K562 (cell line): ENCODE measurements at regions of chr9 and their contacts with region 1.

Region 1: GRCh38 chr9:134325817-134326723 is at the start of gene RXRA:
- DNase-seq: peak; percentile 86 to 94 (median 92)
- ATAC-seq: peak; percentile 75
- H3K4me3 ChIP-seq: peak within 1 kb of the TSS; percentile 62
- H3K27ac ChIP-seq: peak within 1 kb of the TSS; percentile 79
- H3K4me1 ChIP-seq: peaks cover 20 to 82% of the 10 kb centered on the region in 2 experiments
- H3K27me3 ChIP-seq: no peaks in the 10 kb centered on the region
- CTCF ChIP-seq: peak in 2 of 3 experiments; percentile 32 to 87; a peak in 3 of 6 replicates
- EP300 ChIP-seq: no peak
- POLR2A ChIP-seq: no peak; the same call in 1 of the 2 replicates
- RAD21 ChIP-seq: no peak
- polyA plus RNA-seq, gene RXRA: 0.35 to 0.56 TPM

Region 2: DNA sequence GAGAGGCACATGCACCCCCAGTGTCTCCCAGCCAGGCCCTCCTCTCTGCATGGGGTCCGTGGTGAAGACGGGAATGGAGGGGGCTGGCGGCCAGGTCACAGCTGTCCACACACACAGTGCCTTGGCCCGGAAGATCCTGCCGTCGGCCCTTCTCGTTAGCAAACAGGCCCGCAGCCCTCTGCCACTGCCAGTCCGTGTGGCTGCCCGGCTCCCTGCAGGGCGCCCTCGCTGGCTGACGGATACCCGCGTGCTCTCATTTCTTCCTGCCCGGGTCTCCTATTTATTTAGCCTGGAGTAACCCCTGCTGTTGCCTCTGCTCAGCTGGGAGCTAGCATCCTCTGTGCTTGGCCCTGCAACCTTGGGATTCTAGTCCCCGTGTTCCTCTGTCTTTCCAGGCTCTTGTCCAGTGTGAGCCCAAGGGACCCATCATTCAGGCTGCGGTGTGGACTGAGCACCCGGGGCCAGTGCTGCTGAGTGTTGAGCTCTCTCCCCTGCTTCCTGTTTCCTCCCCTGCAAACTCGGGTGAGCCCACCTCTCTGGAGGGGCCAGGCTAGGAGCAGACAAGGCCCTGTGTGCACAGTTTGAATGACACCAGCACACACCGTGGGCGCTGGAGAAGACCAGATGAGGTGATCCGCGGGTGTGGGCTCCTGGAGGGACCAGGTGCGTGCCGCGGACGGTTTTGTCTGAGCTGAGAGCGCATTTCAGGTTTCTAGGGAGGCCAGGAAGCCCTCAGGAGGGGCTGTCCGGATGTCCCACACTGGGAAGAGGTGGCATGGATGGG is 147.1 kb before region 1 on chr9:
- CTCF ChIA-PET with region 1: no interaction called
- POLR2A ChIA-PET with region 1: no interaction called
- in situ Hi-C with region 1: no loop called
- intact Hi-C with region 1: loop called (anchors 10 kb)
- DNase-seq: no peak
- ATAC-seq: no peak
- H3K4me3 ChIP-seq: no peak overlapping the region
- H3K27ac ChIP-seq: no peak overlapping the region
- H3K4me1 ChIP-seq: peaks cover 2 to 36% of the 10 kb centered on the region in 2 experiments; a peak in 3 of 5 replicates
- H3K27me3 ChIP-seq: peaks cover 34 to 71% of the 10 kb centered on the region in 2 experiments; a peak in 4 of 5 replicates
- CTCF ChIP-seq: no peak
- EP300 ChIP-seq: no peak
- POLR2A ChIP-seq: no peak
- RAD21 ChIP-seq: no peak

Region 3: DNA sequence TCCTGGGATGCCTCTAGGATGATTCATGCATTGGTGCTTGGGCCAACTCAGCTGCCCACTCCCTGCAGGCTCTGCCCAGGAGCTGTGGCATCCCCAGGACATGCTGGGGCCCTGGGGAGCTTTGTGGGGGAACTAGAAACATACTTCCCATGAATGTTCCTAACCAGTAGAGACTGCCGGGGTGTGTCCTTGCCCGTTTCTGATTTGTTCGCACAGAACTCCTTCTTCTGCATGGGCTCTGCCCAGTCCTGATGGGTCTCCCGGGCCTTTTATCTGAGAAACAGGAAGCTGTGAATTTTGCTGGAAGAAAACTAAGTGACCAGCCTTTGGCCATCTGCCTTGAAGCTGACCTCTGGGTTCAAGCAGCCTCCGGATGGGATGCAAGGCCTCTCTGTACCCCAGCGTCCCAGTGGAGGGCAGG is 90.1 kb before region 1 on chr9:
- CTCF ChIA-PET with region 1: no interaction called
- POLR2A ChIA-PET with region 1: no interaction called
- in situ Hi-C with region 1: no loop called
- intact Hi-C with region 1: no loop called
- DNase-seq: no peak
- ATAC-seq: no peak
- H3K4me3 ChIP-seq: no peak overlapping the region
- H3K27ac ChIP-seq: no peak overlapping the region
- H3K4me1 ChIP-seq: peaks cover 0 to 14% of the 10 kb centered on the region in 2 experiments; a peak in 2 of 5 replicates
- H3K27me3 ChIP-seq: peaks cover 18 to 59% of the 10 kb centered on the region in 2 experiments; a peak in 4 of 5 replicates
- CTCF ChIP-seq: no peak
- EP300 ChIP-seq: no peak
- POLR2A ChIP-seq: no peak
- RAD21 ChIP-seq: no peak

Region 4: DNA sequence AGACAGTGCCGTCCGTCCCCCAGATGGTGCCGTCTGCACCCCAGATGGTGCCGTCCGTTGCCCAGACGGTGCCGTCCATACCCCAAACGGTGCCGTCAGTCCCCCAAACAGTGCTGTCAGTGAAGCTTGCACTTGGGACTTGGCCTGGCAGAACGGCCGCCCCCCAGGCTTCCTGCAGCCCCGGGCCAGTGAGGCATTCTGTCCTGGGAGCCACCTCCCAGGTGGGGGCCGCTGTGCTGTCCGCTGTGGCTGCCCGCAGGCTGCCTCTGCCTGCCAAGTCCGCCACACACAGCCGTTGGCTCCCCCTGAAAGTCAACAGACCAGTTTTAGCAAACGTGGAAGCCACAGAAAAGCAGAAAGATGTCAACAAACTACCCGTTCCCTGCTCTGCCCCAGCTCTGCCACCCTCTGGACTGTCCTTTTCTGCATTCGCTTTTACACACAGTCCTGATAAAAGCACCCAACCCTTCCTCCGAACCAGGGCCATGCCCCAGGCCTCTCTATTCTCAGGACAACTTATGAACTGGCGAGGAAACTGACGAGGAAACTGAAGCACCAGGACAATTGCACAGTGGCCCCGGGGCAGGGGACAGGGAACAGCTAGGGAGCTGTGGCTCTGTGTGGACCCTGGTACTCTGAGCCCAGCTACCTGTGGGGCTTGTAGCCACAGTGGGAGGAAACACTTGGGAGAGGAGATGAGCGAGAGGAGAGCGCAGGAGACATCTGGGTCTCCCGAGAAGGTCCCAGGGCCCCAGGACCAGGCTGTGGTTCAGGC is 39.4 kb before region 1 on chr9:
- CTCF ChIA-PET with region 1: no interaction called
- POLR2A ChIA-PET with region 1: no interaction called
- in situ Hi-C with region 1: no loop called
- intact Hi-C with region 1: no loop called
- DNase-seq: no peak
- ATAC-seq: no peak
- H3K4me3 ChIP-seq: no peak overlapping the region
- H3K27ac ChIP-seq: no peak overlapping the region
- H3K4me1 ChIP-seq: peaks cover 0 to 16% of the 10 kb centered on the region in 2 experiments; a peak in 1 of 5 replicates
- H3K27me3 ChIP-seq: peaks cover 37 to 84% of the 10 kb centered on the region in 2 experiments; a peak in 4 of 5 replicates
- CTCF ChIP-seq: no peak
- EP300 ChIP-seq: no peak
- POLR2A ChIP-seq: no peak
- RAD21 ChIP-seq: no peak

Region 5: GRCh38 chr9:134339183-134339806 is 13.2 kb after region 1 on chr9:
- CTCF ChIA-PET with region 1: no interaction called
- POLR2A ChIA-PET with region 1: interaction called, 12 read pairs
- in situ Hi-C with region 1: no loop called
- intact Hi-C with region 1: no loop called
- DNase-seq: peak in 2 of 4 experiments; percentile 50 to 54
- ATAC-seq: peak; percentile 49
- H3K4me3 ChIP-seq: peak overlapping the region; percentile 2; the same call in 1 of the 2 replicates
- H3K27ac ChIP-seq: peak overlapping the region; percentile 81
- H3K4me1 ChIP-seq: peaks cover 44 to 100% of the 10 kb centered on the region in 2 experiments
- H3K27me3 ChIP-seq: no peaks in the 10 kb centered on the region
- CTCF ChIP-seq: no peak
- EP300 ChIP-seq: no peak
- POLR2A ChIP-seq: no peak
- RAD21 ChIP-seq: no peak